T-cell (primary cell): ENCODE measurements at regions of chr16 and their contacts with region 1.

Region 1: GRCh38 chr16:68756250-68756915 is 19.3 kb downstream of the CDH1 start:
- DNase-seq: peak in 2 of 35 experiments; percentile 2 to 20
- ATAC-seq: peak; percentile 47 to 73 (median 66)
- H3K4me3 ChIP-seq: no peak overlapping the region
- H3K4me3 Mint-ChIP-seq: peak overlapping the region in 1 of 3 donors; percentile 14
- H3K27ac ChIP-seq: no peak overlapping the region
- H3K27ac Mint-ChIP-seq: peak overlapping the region; percentile 55 to 74
- H3K4me1 ChIP-seq: peaks cover 0 to 6% of the 10 kb centered on the region in 2 experiments
- H3K4me1 Mint-ChIP-seq: peaks cover 0 to 36% (median 22%) of the 10 kb centered on the region in 3 donors
- H3K27me3 ChIP-seq: peaks cover 0 to 2% of the 10 kb centered on the region in 2 experiments
- H3K27me3 Mint-ChIP-seq: peaks cover 0 to 3% of the 10 kb centered on the region in 2 donors

Region 2: GRCh38 chr16:68460067-68460466 is 296.3 kb before region 1 on chr16:
- CTCF ChIA-PET with region 1: no interaction called
- POLR2A ChIA-PET with region 1: no interaction called
- DNase-seq: no peak
- ATAC-seq: no peak
- H3K4me3 ChIP-seq: no peak overlapping the region
- H3K4me3 Mint-ChIP-seq: no peak overlapping the region
- H3K27ac ChIP-seq: no peak overlapping the region
- H3K27ac Mint-ChIP-seq: no peak overlapping the region
- H3K4me1 ChIP-seq: no peaks in the 10 kb centered on the region
- H3K4me1 Mint-ChIP-seq: no peaks in the 10 kb centered on the region
- H3K27me3 ChIP-seq: peaks cover 0 to 10% of the 10 kb centered on the region in 2 experiments
- H3K27me3 Mint-ChIP-seq: peaks cover 0 to 17% of the 10 kb centered on the region in 2 donors

Region 3: GRCh38 chr16:68605746-68606145 is 150.6 kb before region 1 on chr16:
- CTCF ChIA-PET with region 1: no interaction called
- POLR2A ChIA-PET with region 1: no interaction called
- DNase-seq: no peak
- ATAC-seq: no peak
- H3K4me3 ChIP-seq: no peak overlapping the region
- H3K4me3 Mint-ChIP-seq: no peak overlapping the region
- H3K27ac ChIP-seq: no peak overlapping the region
- H3K27ac Mint-ChIP-seq: no peak overlapping the region
- H3K4me1 ChIP-seq: no peaks in the 10 kb centered on the region
- H3K4me1 Mint-ChIP-seq: no peaks in the 10 kb centered on the region
- H3K27me3 ChIP-seq: no peaks in the 10 kb centered on the region
- H3K27me3 Mint-ChIP-seq: no peaks in the 10 kb centered on the region

Region 4: DNA sequence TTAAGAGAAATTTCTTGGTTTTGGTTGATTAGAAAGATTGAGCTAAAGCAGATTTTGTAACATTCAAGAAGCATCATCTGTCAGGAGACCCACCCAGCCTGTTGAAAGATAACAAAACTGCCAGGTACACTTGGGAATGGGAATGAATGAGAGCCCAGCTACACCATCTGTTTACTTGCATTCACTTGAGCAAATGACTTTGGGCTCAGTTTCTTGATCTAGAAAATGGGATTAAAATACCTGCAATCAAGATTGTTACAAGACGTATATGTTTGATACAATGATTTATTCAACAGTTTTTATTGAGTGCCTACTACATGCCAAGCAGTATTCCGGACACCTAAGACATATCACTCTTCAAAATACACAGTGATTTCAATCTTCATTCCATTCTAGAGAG is 272.7 kb after region 1 on chr16:
- CTCF ChIA-PET with region 1: no interaction called
- POLR2A ChIA-PET with region 1: interaction called in 1 of 2 experiments, 14 read pairs
- DNase-seq: no peak
- ATAC-seq: no peak
- H3K4me3 ChIP-seq: no peak overlapping the region
- H3K4me3 Mint-ChIP-seq: no peak overlapping the region
- H3K27ac ChIP-seq: no peak overlapping the region
- H3K27ac Mint-ChIP-seq: no peak overlapping the region
- H3K4me1 ChIP-seq: no peaks in the 10 kb centered on the region
- H3K4me1 Mint-ChIP-seq: no peaks in the 10 kb centered on the region
- H3K27me3 ChIP-seq: no peaks in the 10 kb centered on the region
- H3K27me3 Mint-ChIP-seq: no peaks in the 10 kb centered on the region

Region 5: GRCh38 chr16:69166221-69166833 is 409.9 kb after region 1 on chr16:
- CTCF ChIA-PET with region 1: interaction called in 1 of 2 experiments, 10 read pairs
- POLR2A ChIA-PET with region 1: no interaction called
- DNase-seq: peak in 20 of 35 experiments; percentile 3 to 39 (median 14)
- ATAC-seq: peak; percentile 40 to 84 (median 78)
- H3K4me3 ChIP-seq: no peak overlapping the region
- H3K4me3 Mint-ChIP-seq: peak overlapping the region; percentile 6 to 33 (median 8)
- H3K27ac ChIP-seq: peak overlapping the region; percentile 8
- H3K27ac Mint-ChIP-seq: peak overlapping the region; percentile 78 to 84
- H3K4me1 ChIP-seq: peaks cover 0 to 15% of the 10 kb centered on the region in 2 experiments
- H3K4me1 Mint-ChIP-seq: peaks cover 17 to 36% (median 26%) of the 10 kb centered on the region in 3 donors
- H3K27me3 ChIP-seq: no peaks in the 10 kb centered on the region
- H3K27me3 Mint-ChIP-seq: no peaks in the 10 kb centered on the region

Region 6: DNA sequence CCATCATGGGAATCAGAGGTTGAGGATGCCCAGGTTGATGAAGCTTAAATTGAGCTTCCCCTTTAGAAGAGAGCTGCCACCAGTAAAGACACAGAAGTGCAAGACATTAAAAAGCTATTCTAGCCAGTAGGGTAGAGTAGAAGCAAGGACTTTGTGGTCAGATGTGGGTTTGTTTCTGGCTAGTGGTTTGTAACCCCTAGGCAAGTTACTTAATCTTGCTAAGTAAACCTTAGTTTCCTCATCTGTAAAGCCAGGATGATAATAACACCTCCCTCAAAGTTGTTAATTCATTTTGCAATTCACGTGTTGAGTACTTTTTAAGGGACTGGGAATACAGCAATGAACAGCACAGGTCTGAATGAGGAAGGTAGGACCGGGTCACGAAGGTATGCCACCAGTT is 434.2 kb after region 1 on chr16:
- CTCF ChIA-PET with region 1: no interaction called
- POLR2A ChIA-PET with region 1: no interaction called
- DNase-seq: peak in 1 of 35 experiments; percentile 16
- ATAC-seq: no peak
- H3K4me3 ChIP-seq: no peak overlapping the region
- H3K4me3 Mint-ChIP-seq: peak overlapping the region in 2 of 3 donors; percentile 28 to 47
- H3K27ac ChIP-seq: no peak overlapping the region
- H3K27ac Mint-ChIP-seq: peak overlapping the region; percentile 39 to 82
- H3K4me1 ChIP-seq: peaks cover 15 to 35% of the 10 kb centered on the region in 2 experiments
- H3K4me1 Mint-ChIP-seq: peaks cover 43 to 61% (median 60%) of the 10 kb centered on the region in 3 donors
- H3K27me3 ChIP-seq: no peaks in the 10 kb centered on the region
- H3K27me3 Mint-ChIP-seq: no peaks in the 10 kb centered on the region